Uterus (tissue), 4 donors: ENCODE measurements at regions of chr18 and their contacts with region 1.

Region 1: GRCh38 chr18:32566960-32567359 is 96.3 kb upstream of the GAREM1 start:
- DNase-seq: no peak
- H3K4me3 ChIP-seq: no peak overlapping the region
- H3K27ac ChIP-seq: no peak overlapping the region
- H3K4me1 ChIP-seq: no peaks in the 10 kb centered on the region
- H3K27me3 ChIP-seq: no peaks in the 10 kb centered on the region
- CTCF ChIP-seq: no peak
- POLR2A ChIP-seq: no peak

Region 2: GRCh38 chr18:32261003-32261402 is 306.0 kb before region 1 on chr18:
- intact Hi-C with region 1: loop called (anchors 10 kb)
- DNase-seq: no peak
- H3K4me3 ChIP-seq: no peak overlapping the region
- H3K27ac ChIP-seq: no peak overlapping the region
- H3K4me1 ChIP-seq: no peaks in the 10 kb centered on the region
- H3K27me3 ChIP-seq: no peaks in the 10 kb centered on the region
- CTCF ChIP-seq: no peak
- POLR2A ChIP-seq: no peak

Region 3: GRCh38 chr18:32771169-32771751 is 204.3 kb after region 1 on chr18:
- intact Hi-C with region 1: no loop called
- DNase-seq: no peak
- H3K4me3 ChIP-seq: peak overlapping the region; percentile 33 to 36
- H3K27ac ChIP-seq: peak overlapping the region; percentile 42 to 65
- H3K4me1 ChIP-seq: peaks cover 0 to 14% of the 10 kb centered on the region in 2 donors
- H3K27me3 ChIP-seq: peaks cover 0 to 8% of the 10 kb centered on the region in 2 donors
- CTCF ChIP-seq: no peak
- POLR2A ChIP-seq: no peak

Region 4: DNA sequence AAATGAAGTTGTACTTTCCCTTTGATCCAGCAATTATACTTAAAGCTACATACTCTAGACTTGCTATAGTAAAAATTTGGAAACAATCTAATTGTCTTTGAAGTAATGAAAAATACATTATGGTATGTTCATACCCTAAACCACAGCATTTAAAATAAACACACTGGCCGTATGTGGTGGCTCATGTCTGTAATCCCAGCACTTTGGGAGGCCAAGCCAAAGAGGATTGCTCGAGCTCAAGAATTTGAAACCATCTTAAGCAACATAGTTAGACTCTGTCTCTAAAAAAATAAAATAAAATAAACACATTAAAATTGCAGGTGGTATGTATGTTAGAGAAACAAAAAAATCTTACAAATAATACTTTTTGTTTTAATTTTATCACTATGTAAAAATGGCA is 413.9 kb after region 1 on chr18:
- intact Hi-C with region 1: no loop called
- DNase-seq: no peak
- H3K4me3 ChIP-seq: no peak overlapping the region
- H3K27ac ChIP-seq: no peak overlapping the region
- H3K4me1 ChIP-seq: no peaks in the 10 kb centered on the region
- H3K27me3 ChIP-seq: no peaks in the 10 kb centered on the region
- CTCF ChIP-seq: no peak
- POLR2A ChIP-seq: no peak